Posterior cingulate gyrus (tissue), 11 donors: ENCODE measurements at regions of chr2 and their contacts with region 1.

Region 1: GRCh38 chr2:57906152-57906732 is 140.4 kb upstream of the VRK2 start:
- DNase-seq: no peak

Region 2: DNA sequence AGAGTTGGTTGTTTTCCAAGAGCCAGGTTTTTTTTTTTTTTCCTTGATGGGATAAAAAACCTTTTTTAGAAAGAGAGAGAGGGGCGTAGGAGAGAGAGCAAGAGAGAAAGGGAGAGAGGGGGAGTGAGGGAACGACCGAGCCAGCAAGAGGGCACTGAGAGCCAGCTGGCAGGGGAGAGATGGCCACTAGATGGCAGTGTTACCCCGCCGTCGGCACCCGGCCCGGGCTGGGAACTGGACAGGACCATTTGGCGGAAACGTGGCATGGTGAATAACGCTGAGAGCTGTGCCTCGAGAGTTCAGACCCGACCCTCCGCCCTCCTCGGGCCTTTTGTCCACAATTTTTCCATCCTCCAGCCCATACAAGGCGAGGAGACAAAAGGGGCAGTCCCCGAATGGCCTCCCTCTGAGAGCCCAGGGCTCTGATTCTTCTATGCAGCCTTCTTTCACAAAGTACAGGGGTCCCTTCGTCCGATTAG is 146.4 kb before region 1 on chr2:
- intact Hi-C with region 1: loop called (anchors 10 kb)
- DNase-seq: peak; percentile 84 to 99 (median 95)

Region 3: GRCh38 chr2:57821088-57821487 is 85.2 kb before region 1 on chr2:
- intact Hi-C with region 1: no loop called
- DNase-seq: no peak

Region 4: DNA sequence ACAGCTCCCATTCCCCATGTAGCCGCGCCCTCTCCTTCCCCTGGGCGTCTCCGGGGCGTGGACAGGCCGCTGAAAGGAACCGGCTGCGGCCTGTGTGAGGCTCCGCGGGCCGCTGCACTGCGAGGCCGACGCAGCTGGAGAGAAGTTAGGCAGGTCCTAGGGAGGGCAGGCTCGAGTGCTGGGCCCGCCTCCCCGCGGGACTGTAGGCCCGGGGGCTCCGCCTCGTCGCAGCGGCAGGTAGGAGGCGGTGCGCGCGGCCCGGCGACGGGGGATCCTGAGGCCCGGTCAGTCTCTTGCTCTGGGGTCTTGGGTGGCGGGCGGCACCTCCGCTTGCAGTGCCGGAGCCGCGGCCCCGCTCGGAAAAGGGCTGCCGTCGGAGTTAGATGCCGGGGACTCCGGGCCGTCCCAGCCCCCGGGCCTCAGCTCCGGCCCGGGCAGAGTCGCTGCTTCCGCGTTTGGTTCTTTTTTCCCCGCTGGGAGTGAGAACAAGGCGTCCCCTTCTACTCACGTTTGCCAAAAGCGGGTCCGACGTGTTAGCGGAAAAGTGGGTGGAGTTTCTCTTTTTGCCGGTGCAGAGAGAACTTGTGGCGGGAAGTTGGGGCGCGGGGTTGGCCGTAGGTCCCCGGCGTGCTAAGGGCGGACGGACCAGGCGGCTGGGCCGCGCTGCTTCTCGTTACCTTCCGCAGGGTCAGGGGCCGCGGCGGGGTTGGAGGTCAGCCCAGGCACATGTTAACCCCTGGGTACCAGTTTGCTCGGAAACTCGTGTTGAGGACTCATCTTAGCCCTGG is 140.5 kb after region 1 on chr2 and contains the start of gene VRK2:
- intact Hi-C with region 1: loop called (anchors 5 kb)
- DNase-seq: peak; percentile 20 to 93 (median 44)

Region 5: GRCh38 chr2:58448065-58448507 is 541.8 kb after region 1 on chr2:
- intact Hi-C with region 1: loop called (anchors 5 kb)
- DNase-seq: peak in 7 of 10 donors; percentile 53 to 93 (median 75)